ENCODE measurements at regions of chr3 and their contacts with region 1.

Region 1: DNA sequence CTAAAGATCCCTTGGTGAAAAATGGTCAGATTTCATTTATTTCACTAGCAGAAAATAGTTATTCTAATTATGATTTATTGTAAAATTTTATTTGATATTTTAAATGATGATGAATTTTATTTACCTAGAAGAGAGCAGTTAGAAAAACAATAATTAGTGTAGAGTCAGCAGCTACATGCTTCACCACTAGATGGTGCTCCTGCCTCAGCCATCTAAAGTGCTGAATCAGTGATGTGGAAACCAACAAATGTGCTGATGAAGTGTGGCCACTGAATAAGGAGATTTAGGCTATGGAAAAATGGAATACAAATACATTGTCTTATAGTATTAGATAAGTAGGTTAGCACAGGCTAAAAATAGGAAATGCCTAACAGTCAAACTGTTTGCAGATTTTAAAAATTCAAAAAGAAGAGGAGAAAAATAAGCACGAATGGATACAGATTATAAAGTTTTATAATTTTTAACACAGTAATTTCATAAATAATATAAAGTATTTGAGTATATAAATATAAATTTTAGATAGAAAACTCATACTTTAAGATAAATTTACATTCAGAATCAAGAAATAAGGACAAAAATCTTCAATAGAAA is 109.8 kb downstream of the PPP2R3A start:
- DNase-seq: peak; percentile 65
- ATAC-seq: peak; percentile 61 to 73

Region 2: GRCh38 chr3:136008231-136008630 is 67.1 kb before region 1 on chr3:
- intact Hi-C with region 1: no loop called
- DNase-seq: no peak
- ATAC-seq: no peak

Region 3: DNA sequence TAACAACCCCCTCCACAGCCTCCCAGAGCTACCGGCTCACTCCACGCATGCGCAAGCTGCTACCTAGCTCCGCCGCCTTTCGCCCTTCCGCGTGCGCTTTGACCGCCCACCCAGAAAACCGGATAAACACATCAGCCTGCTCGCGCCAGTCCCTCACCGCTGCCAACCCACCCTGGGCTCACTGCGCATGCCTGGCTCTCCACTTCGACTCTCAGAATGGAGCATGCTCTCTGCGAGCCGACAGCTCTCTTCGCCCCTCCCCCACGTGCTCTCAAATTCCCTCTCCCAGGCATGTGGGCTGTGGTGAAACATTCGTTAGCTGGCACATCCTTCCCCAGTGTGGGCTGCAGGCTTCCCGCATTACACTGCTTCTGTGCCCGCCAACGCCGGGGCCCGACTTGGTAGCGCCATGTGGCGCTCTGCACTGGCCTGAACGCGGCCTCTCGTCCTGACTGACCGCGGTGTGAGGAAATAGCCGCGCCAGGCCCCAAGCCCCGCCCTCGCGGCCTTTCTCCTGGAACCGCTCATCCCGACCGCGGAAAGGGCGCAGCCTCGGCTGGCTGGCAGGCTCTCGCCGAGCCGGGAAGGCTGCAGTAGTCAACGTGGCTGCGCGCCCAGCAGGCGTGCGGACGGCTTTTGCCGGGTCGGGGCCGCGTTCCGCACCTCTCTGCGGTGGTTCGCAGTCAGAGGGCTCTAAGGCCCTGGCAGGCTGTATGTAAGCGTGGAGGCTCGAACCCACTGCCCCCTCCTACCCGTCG is 121.3 kb after region 1 on chr3:
- intact Hi-C with region 1: loop called in 1 of 2 experiments (anchors 5 kb)
- DNase-seq: peak; percentile 99
- ATAC-seq: peak; percentile 87 to 92

Region 4: DNA sequence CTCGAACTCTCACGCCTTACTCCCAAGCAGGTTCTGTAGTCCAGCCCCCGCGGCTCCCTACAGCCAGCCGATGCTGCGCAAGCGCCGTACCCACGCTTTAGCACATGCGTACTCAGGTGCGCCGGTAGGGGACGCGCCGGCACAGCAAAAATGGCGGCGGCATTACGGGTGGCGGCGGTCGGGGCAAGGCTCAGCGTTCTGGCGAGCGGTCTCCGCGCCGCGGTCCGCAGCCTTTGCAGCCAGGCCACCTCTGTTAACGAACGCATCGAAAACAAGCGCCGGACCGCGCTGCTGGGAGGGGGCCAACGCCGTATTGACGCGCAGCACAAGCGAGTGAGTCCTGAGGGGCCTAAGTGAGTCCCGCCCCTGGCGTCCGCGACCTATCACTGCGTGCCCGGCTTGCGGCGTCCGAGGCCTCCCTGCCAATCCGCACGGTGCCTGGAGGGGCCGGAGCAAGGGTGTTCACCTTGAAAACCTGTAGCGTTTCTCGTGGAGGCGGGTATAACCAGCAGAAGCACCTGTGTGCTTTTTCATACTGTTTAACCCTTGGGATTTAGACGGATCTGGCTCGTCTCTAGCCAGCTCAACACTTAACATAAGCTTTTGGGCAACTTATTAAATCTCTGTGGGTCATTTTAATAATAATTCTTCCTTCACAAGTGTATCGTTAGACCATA is 175.1 kb after region 1 on chr3 and contains the start of gene PCCB:
- intact Hi-C with region 1: loop called (anchors 5 to 10 kb)
- DNase-seq: peak; percentile 97
- ATAC-seq: peak; percentile 99
- total RNA-seq, gene PCCB: 67.7 to 70.8 TPM

Region 5: GRCh38 chr3:136390574-136390973 is 315.3 kb after region 1 on chr3:
- intact Hi-C with region 1: loop called in 1 of 2 experiments (anchors 5 kb)
- DNase-seq: no peak
- ATAC-seq: peak; percentile 47 to 87

Region 6: GRCh38 chr3:136752422-136753325 is 677.4 kb after region 1 on chr3:
- intact Hi-C with region 1: loop called in 1 of 2 experiments (anchors 2 kb)
- DNase-seq: peak; percentile 99
- ATAC-seq: peak; percentile 93 to 96

Region 7: DNA sequence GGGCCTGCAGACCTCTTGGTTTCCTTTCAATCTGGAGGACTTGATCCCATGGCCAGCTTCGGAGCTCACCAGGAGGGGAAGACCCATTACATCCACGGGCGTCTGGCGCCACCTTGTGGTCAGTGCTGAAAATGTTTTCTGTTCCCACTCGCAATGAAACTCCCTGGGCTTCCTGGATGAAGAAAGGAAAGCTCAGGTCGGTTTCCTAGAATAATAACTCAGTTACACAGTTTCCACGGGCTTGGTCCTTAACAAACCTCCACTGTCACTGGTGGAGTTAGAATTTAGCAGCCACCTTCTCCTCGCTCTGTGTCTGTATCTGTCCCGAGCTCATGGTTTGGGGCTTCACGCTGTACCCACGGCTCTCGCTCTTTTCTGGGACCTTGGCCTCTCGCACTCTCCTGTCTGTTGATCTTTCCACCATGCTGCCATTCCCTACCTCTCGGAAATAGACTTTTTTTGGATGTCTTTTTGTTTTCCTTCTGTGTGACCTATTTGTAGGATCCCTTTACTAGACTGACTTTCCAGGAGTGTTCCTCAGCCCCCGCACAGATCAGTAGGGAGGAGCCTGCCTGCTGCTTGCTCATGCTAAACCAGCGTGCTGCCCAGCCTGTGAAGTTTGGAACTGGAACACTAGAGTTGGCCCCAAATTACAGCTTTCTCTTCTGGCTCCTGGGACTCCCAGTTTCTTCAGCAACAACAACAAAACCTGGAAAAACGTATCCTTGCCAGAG is 938.8 kb after region 1 on chr3:
- intact Hi-C with region 1: loop called in 1 of 2 experiments (anchors 5 kb)
- DNase-seq: peak; percentile 89
- ATAC-seq: peak; percentile 96